Dorsolateral prefrontal cortex (tissue), 120 donors: ENCODE measurements at regions of chr2 and their contacts with region 1.

Region 1: GRCh38 chr2:201425952-201426351 is 25.3 kb downstream of the TRAK2 start:
- DNase-seq: peak in 1 of 10 donors; percentile 7
- H3K4me3 ChIP-seq: no peak overlapping the region
- H3K27ac ChIP-seq: no peak overlapping the region
- H3K27me3 ChIP-seq: no peaks in the 10 kb centered on the region
- CTCF ChIP-seq: no peak

Region 2: GRCh38 chr2:201383156-201383555 is 42.8 kb before region 1 on chr2:
- intact Hi-C with region 1: no loop called
- DNase-seq: no peak
- H3K4me3 ChIP-seq: no peak overlapping the region
- H3K27ac ChIP-seq: no peak overlapping the region
- H3K27me3 ChIP-seq: no peaks in the 10 kb centered on the region
- CTCF ChIP-seq: no peak

Region 3: DNA sequence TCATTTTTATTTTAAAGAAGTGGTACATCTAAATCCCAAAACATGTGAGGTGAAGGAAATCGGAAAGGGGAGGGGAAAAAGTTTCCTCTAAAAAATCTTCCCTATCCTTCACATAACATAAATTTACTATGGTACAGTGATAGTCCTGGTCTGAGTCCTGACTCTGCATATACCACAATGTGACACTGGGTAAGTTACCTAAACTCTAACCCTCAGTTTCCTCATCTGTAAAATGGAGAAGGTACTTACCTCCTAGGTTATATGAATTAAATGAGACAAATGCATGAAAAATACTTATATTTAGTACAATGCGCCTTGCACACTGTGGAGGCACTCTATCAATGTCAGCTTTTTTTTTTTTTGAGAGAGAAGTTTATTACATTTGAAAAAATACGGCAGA is 17.0 kb before region 1 on chr2:
- intact Hi-C with region 1: loop called in 1 of 2 experiments (anchors 2 kb)
- DNase-seq: no peak
- H3K4me3 ChIP-seq: no peak overlapping the region
- H3K27ac ChIP-seq: no peak overlapping the region
- H3K27me3 ChIP-seq: no peaks in the 10 kb centered on the region
- CTCF ChIP-seq: no peak

Region 4: DNA sequence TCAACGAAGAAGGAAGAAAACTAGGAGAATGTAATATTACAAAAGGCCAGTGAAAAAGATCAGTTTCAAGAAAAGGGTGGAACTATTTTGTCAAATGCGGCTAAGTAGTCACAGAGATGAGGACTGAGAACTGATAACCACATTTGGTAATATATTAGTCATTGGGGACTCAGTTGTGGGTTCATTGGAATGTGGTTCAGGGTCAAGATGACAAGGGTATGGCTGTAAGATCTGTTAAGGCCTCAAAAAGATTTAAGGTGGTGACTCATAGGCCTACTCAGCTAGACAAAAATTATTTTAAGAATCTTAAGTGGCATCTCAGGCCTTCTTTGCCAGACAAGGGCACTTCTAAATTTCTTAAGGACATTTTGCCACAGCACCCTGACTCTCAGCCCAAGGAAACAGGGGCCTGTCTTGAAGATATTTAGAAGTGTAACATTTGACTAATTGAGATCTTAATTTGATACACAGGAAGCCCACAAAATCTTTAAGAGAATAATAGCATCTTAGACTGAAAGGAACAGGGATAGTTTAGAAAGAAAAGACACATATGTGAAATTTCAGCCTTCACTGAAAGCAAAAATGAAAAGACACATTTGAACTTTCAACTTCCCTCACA is 106.8 kb after region 1 on chr2:
- intact Hi-C with region 1: no loop called
- DNase-seq: no peak
- H3K4me3 ChIP-seq: no peak overlapping the region
- H3K27ac ChIP-seq: no peak overlapping the region
- H3K27me3 ChIP-seq: no peaks in the 10 kb centered on the region
- CTCF ChIP-seq: no peak